ENCODE measurements at regions of chr14 and their contacts with region 1.

Region 1: DNA sequence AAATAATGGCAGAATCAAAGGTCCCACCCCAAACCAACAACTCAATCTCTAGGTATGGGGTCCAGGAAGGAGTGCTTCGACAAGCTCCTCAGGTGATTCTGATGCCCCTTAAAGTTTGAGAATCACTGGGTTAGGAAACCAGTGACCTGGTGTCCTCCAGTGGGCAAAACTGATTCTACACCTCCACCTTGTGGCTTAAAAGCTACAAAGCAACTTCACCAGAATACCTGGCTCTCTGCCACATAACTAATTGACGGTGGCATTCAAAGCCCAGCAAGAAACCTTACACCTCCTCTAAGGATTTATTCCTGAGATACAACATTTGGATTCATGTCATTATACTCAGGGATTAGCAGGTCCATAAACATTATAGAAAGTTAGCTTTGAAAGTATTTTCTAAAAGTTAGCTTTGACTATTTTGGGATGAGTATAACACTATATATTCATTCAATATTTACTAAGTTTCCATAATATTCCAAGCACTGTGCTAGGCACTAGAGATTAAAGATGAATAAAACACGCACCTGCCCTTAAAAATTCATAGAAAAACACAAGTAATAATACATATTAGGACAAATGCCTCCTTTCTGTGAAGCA is 45.4 kb downstream of the DCAF5 start:
- DNase-seq: peak; percentile 30 to 56
- H3K4me3 ChIP-seq: no peak overlapping the region
- H3K27ac ChIP-seq: no peak overlapping the region
- H3K4me1 ChIP-seq: no peaks in the 10 kb centered on the region
- H3K27me3 ChIP-seq: no peaks in the 10 kb centered on the region
- CTCF ChIP-seq: peak; percentile 52 to 90 (median 70)
- POLR2A ChIP-seq: no peak

Region 2: DNA sequence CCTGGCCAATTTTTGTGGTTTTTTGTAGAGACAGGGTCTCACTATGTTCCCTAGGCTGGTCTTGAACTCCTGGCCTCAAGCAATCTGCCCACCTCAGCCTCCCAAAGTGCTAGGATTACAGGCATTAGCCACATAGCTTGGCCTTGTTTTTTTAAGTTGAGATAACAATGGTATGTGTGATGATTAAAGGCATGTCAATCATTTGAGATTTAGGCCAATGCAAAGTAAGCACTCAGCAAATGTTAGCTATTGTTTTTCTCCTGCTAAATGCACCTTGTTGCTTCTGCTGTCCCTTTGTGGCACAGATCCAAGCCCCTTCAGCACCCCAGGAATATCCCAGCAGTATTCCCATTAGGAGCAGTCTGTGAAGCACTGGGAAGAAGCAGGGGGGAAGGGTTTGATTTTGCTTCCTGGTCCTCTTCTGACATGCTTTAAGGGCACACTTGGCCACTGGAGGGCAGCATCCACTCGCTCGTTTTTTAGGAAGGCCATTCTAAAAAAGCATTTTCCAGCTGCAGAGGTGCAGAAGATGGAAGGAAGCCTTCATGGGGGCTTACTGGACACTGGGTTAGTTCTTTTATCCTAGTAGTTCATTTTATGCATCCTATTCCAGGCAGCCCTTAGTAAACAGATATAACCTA is 244.4 kb before region 1 on chr14:
- intact Hi-C with region 1: loop called (anchors 10 kb)
- DNase-seq: peak; percentile 81 to 82
- H3K4me3 ChIP-seq: no peak overlapping the region
- H3K27ac ChIP-seq: no peak overlapping the region
- H3K4me1 ChIP-seq: no peaks in the 10 kb centered on the region
- H3K27me3 ChIP-seq: no peaks in the 10 kb centered on the region
- CTCF ChIP-seq: peak; percentile 72 to 78 (median 74)
- POLR2A ChIP-seq: no peak

Region 3: DNA sequence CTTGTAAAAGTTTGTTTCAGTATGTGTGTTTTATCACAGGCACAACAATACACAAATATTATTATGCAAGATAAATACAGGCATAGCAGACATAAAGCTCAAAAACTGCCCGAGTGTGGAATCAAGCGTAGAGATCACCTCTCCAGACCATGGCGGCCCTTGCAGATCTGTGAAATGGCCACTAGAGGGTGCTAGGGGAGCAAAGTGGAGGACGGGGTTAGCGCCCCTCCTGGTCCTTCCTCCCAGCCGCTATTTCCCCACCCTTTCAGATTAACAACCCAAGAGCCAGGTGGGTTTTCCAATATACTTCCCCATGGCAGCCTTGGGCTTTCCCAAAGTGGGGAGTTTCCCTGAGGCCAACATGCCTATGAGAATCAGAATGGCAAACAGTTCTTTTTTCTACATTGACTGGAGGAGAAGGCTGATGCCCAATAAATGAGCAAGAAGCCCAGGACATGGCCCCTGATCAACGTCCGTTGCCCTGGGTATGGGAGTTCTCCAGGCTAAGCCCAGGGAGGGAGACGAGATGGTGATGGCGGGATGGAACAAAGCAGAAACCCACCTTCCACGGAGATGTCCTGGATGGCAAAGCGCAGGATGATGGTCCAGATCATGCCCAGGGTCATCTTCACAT is 195.8 kb before region 1 on chr14:
- intact Hi-C with region 1: loop called (anchors 5 kb)
- DNase-seq: peak; percentile 81 to 83
- H3K4me3 ChIP-seq: no peak overlapping the region
- H3K27ac ChIP-seq: peak overlapping the region; percentile 65 to 72
- H3K4me1 ChIP-seq: no peaks in the 10 kb centered on the region
- H3K27me3 ChIP-seq: no peaks in the 10 kb centered on the region
- CTCF ChIP-seq: peak; percentile 95 to 98 (median 97)
- POLR2A ChIP-seq: no peak